ENCODE measurements at regions of chr14 and their contacts with region 1.

Region 1: DNA sequence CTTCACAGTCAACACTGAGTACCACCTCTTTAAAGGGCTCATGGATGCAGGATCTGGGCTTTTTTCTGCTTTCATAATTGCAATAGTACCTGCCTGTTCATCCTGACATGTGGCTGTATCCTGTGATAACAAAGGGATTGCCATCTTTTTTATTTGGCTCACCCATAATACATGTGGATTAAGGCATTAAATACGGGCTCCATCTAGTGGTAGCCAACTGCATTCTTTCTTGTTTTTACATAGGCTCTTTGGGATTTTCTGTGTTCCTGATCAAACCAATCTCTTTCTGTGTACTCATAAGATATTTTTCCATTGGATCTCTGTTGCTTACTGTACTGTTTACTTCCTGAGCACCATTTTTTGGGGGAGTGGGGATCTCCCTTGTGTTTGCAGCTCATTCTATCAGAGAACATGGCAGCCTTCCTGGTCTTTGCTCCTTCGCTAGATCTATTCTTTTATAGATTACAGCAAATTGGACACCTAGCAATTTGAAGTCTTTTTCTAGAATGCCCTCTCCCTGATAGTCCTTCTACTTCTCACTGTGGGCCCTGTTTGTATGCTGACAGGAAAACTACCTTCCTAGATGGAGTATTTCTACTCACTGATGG is 723.4 kb upstream of the MDGA2 start:
- DNase-seq: peak; percentile 16
- ATAC-seq: peak; percentile 44; the same call in 2 of the 3 replicates
- H3K4me3 ChIP-seq: no peak overlapping the region
- H3K27ac ChIP-seq: no peak overlapping the region
- H3K4me1 ChIP-seq: no peaks in the 10 kb centered on the region
- H3K27me3 ChIP-seq: no peaks in the 10 kb centered on the region
- CTCF ChIP-seq: peak; percentile 58
- EP300 ChIP-seq: no peak
- POLR2A ChIP-seq: no peak
- RAD21 ChIP-seq: no peak

Region 2: GRCh38 chr14:47675466-47676314 is 723.1 kb before region 1 on chr14 and contains the start of gene MDGA2:
- CTCF ChIA-PET with region 1: no interaction called
- POLR2A ChIA-PET with region 1: no interaction called
- in situ Hi-C with region 1: no loop called
- intact Hi-C with region 1: no loop called
- DNase-seq: no peak
- ATAC-seq: peak; percentile 68
- H3K4me3 ChIP-seq: peak within 1 kb of the TSS in 1 of 3 experiments; percentile 40; a peak in 2 of 6 replicates
- H3K27ac ChIP-seq: no peak within 1 kb of the TSS
- H3K4me1 ChIP-seq: no peaks in the 10 kb centered on the region
- H3K27me3 ChIP-seq: peaks cover 1 to 25% of the 10 kb centered on the region in 2 experiments; a peak in 4 of 5 replicates
- CTCF ChIP-seq: no peak
- EP300 ChIP-seq: no peak
- POLR2A ChIP-seq: no peak
- RAD21 ChIP-seq: no peak
- total RNA-seq, gene MDGA2: not detected in 2 replicates

Region 3: GRCh38 chr14:47917345-47917954 is 481.3 kb before region 1 on chr14:
- CTCF ChIA-PET with region 1: interaction called, 4 read pairs
- POLR2A ChIA-PET with region 1: no interaction called
- in situ Hi-C with region 1: no loop called
- intact Hi-C with region 1: loop called (anchors 1 kb)
- DNase-seq: peak; percentile 9
- ATAC-seq: no peak
- H3K4me3 ChIP-seq: no peak overlapping the region
- H3K27ac ChIP-seq: no peak overlapping the region
- H3K4me1 ChIP-seq: no peaks in the 10 kb centered on the region
- H3K27me3 ChIP-seq: no peaks in the 10 kb centered on the region
- CTCF ChIP-seq: peak; percentile 49
- EP300 ChIP-seq: no peak
- POLR2A ChIP-seq: no peak
- RAD21 ChIP-seq: no peak